ENCODE measurements at regions of chr5 and their contacts with region 1.

Region 1: DNA sequence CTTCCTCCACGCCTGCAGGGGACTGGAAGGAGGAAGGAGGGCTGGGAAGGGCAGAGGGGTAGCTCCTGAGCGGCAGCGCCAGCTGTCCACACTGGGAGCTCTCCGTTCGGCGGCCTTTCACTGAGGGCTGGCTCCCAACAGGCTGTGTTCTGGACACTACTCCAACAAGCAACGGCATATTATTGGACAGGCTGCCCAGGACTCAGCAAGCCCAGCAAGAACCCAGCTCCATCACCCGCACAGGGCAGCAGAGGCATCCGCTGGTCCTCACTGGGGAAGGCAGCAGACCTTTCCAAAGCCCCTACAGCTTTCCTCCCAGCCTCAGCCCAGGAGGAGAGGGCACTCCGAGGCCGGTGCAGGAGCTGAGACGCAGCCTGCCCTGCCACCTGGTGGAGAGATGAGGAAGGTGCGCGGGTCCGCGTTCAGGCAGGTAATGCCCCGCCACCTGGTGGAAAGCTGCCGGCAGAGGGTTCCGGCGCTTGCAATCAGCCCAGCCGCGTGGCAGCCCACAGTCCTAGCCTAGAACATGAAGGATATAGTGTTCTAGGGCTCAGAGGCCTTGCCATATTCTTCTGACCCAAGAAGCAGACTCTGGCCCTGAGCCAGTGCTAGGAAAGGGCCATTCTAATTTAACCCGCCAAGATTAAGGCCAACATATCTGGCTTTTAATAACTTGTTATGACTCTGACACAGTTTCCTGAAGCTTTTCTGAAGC is 74.4 kb downstream of the NRG2 start:
- DNase-seq: peak; percentile 91
- H3K4me3 ChIP-seq: peak overlapping the region in 1 of 2 experiments; percentile 28; a peak in 1 of 4 replicates
- H3K27ac ChIP-seq: no peak overlapping the region
- H3K4me1 ChIP-seq: peaks cover 0 to 16% of the 10 kb centered on the region in 2 experiments; a peak in 1 of 4 replicates
- H3K27me3 ChIP-seq: no peaks in the 10 kb centered on the region
- CTCF ChIP-seq: peak; percentile 97
- EP300 ChIP-seq: no peak
- RAD21 ChIP-seq: peak; percentile 99

Region 2: GRCh38 chr5:139633295-139634027 is 335.2 kb before region 1 on chr5:
- CTCF ChIA-PET with region 1: interaction called, 26 read pairs
- POLR2A ChIA-PET with region 1: no interaction called
- DNase-seq: peak; percentile 77
- H3K4me3 ChIP-seq: no peak overlapping the region; a peak in 1 of 4 replicates
- H3K27ac ChIP-seq: peak overlapping the region in 1 of 2 experiments; percentile 12; a peak in 1 of 4 replicates
- H3K4me1 ChIP-seq: peaks cover 29 to 43% of the 10 kb centered on the region in 2 experiments
- H3K27me3 ChIP-seq: no peaks in the 10 kb centered on the region
- CTCF ChIP-seq: peak; percentile 98
- EP300 ChIP-seq: no peak
- RAD21 ChIP-seq: peak; percentile 97

Region 3: GRCh38 chr5:139806726-139807646 is 161.7 kb before region 1 on chr5:
- CTCF ChIA-PET with region 1: interaction called, 34 read pairs
- POLR2A ChIA-PET with region 1: no interaction called
- DNase-seq: no peak
- H3K4me3 ChIP-seq: no peak overlapping the region
- H3K27ac ChIP-seq: no peak overlapping the region
- H3K4me1 ChIP-seq: no peaks in the 10 kb centered on the region
- H3K27me3 ChIP-seq: peaks cover 15% of the 10 kb centered on the region
- CTCF ChIP-seq: no peak
- EP300 ChIP-seq: no peak
- RAD21 ChIP-seq: peak; percentile 26; the same call in 1 of the 2 replicates

Region 4: DNA sequence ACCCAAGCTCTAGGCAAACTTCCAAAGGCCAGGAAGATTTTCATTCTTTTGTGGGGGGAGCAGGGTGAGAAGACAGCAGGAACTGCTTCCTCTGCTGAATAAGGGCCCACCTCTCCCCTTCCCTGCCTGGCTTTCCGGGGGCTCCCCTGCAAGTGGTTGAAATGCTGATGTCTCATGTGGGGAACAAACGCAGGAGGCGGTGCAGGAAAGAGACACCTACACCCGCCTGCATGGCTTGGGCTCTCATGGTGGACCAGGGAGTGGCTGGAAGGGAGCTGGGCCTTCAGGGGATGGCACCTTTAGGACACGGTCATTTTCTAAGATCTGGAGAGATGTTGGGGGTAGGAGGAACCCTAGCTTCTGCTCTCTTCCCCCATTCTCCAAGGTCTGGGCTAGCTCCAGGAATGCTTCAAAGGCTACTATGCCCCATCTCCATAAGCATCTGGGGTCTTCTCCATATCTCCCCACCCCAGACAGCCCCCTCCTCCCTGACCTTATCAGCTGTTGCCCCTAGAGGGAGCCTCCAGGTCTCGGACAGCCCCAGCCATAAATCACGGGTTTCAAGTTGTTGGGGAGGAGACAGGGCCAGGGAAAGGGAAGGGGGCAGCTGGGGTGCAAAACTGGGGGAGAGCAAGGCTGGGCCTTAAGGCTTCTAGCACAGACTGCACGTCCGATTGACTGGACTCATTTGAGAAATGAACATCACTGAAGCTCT is 96.5 kb before region 1 on chr5:
- CTCF ChIA-PET with region 1: interaction called, 161 read pairs
- POLR2A ChIA-PET with region 1: no interaction called
- DNase-seq: no peak
- H3K4me3 ChIP-seq: no peak overlapping the region
- H3K27ac ChIP-seq: no peak overlapping the region
- H3K4me1 ChIP-seq: peaks cover 0 to 15% of the 10 kb centered on the region in 2 experiments; a peak in 1 of 4 replicates
- H3K27me3 ChIP-seq: no peaks in the 10 kb centered on the region
- CTCF ChIP-seq: peak; percentile 24; the same call in 1 of the 2 replicates
- EP300 ChIP-seq: no peak
- RAD21 ChIP-seq: 0 out of 2 replicates have a peak, but pooled peaks have one; percentile 13

Region 5: GRCh38 chr5:139925650-139926640 is 42.8 kb before region 1 on chr5:
- CTCF ChIA-PET with region 1: interaction called, 11 read pairs
- POLR2A ChIA-PET with region 1: no interaction called
- DNase-seq: no peak
- H3K4me3 ChIP-seq: no peak overlapping the region
- H3K27ac ChIP-seq: peak overlapping the region in 1 of 2 experiments; percentile 28; a peak in 1 of 4 replicates
- H3K4me1 ChIP-seq: peaks cover 0 to 16% of the 10 kb centered on the region in 2 experiments; a peak in 1 of 4 replicates
- H3K27me3 ChIP-seq: no peaks in the 10 kb centered on the region
- CTCF ChIP-seq: no peak
- EP300 ChIP-seq: no peak
- RAD21 ChIP-seq: 0 out of 2 replicates have a peak, but pooled peaks have one; percentile 5

Region 6: GRCh38 chr5:139997276-139997675 is 28.6 kb after region 1 on chr5:
- CTCF ChIA-PET with region 1: interaction called, 19 read pairs
- POLR2A ChIA-PET with region 1: no interaction called
- DNase-seq: no peak
- H3K4me3 ChIP-seq: no peak overlapping the region
- H3K27ac ChIP-seq: no peak overlapping the region
- H3K4me1 ChIP-seq: peaks cover 0 to 4% of the 10 kb centered on the region in 2 experiments; a peak in 1 of 4 replicates
- H3K27me3 ChIP-seq: no peaks in the 10 kb centered on the region
- CTCF ChIP-seq: no peak
- EP300 ChIP-seq: no peak
- RAD21 ChIP-seq: no peak

Region 7: DNA sequence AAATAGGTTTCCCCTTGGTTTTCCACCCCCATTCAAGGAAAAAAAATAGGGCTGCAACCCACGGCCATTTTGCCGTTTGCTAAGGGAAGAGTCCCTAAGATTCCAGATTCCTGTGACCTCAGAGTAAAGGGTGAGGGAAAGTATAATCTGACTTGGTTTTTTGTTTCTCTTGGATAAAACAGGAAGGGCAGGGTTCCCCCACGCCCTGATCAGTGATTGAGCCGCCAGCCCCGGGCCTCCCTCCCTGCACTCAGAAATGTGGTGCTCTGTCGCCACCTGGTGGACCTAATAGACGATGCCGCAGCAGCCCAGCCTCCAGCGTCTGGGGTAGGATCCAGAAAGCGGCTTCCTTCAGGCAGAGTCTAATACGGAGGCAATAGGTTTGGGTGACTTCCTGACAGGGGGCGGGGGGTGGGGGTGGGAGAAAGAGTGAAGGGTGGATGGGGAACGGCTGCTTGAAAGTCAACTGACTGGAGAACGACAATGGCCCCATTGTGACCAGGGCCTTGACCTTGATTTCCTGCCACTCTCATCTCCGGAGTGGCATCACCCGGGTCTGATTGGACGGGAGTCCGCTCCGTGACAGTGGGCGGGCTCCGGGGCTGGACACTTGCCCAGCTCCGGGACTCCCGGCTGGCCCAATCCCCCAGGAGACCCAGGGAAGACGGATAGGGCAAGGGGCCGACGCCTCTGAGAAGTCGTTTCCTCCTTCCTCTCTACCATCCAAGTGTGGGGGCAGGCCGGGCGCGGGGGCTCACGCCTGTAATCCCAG is 188.5 kb after region 1 on chr5:
- CTCF ChIA-PET with region 1: interaction called, 25 read pairs
- POLR2A ChIA-PET with region 1: no interaction called
- DNase-seq: peak; percentile 92
- H3K4me3 ChIP-seq: peak overlapping the region; percentile 35 to 46
- H3K27ac ChIP-seq: no peak overlapping the region; a peak in 1 of 4 replicates
- H3K4me1 ChIP-seq: peaks cover 0 to 5% of the 10 kb centered on the region in 2 experiments; a peak in 1 of 4 replicates
- H3K27me3 ChIP-seq: no peaks in the 10 kb centered on the region
- CTCF ChIP-seq: peak; percentile 92
- EP300 ChIP-seq: no peak
- RAD21 ChIP-seq: peak; percentile 94

Measured in SK-N-SH (cell line).